ENCODE measurements at regions of chr5 and their contacts with region 1.

Region 1: DNA sequence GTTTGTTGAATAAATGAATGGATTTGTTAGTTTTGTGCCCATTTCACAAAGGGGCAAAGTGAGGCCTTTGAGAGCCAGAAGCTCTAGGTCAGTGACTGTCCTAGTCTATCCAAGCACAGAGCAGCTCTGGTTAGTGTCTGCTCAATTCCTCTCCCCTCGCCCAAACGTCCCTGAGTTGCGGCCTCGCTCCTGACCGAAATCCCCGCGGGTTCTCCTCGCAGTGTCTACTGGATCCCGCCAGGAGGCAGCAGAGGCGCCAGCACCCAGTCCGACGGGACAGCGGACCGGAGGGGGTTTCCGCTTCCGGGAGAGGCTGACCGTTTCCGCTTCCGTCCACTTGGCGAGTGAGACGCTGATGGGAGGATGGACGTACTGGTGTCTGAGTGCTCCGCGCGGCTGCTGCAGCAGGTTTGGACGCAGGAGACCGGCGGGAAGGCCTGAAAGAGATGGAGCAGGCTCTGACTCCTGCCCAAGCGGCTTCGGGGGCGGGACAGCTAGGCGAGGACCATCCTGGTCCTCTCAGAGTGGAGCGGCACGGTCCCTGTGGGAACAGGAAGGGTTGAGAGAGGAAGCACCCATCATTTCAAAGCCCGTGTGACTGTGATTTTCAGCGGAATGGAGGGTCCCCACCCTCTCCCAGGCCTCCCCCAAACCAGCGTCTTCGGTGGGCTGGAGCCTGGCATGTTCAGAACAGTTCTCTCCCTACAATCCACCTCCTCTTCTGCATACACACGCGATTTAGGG is at the start of gene RARS1:
- DNase-seq: peak; percentile 85 to 99 (median 96)

Region 2: GRCh38 chr5:167814828-167815227 is 671.5 kb before region 1 on chr5:
- intact Hi-C with region 1: no loop called
- DNase-seq: no peak

Region 3: DNA sequence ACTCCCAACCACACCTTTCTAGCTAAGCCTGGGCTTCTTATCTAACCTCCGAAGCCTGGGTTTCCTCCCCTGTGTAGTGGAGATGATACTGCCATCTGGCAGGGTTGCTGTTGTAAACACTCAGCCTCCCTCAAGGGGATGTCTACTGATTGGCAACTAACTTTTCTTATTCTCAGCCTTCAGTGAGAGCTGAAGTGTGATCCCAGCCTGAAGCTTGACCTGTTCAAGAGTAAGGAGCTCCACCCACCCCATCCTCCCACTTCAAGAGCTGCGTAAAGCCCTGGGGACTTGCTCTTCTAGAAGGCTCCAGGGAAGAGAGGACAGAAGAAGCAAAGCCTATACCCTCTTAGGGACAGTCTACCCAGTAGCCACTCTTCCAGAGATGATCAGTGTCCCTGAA is 216.3 kb before region 1 on chr5:
- intact Hi-C with region 1: loop called (anchors 10 kb)
- DNase-seq: no peak

Region 4: GRCh38 chr5:168434001-168434400 is 52.3 kb before region 1 on chr5:
- intact Hi-C with region 1: no loop called
- DNase-seq: peak in 26 of 42 donors; percentile 18 to 71 (median 45)

Region 5: DNA sequence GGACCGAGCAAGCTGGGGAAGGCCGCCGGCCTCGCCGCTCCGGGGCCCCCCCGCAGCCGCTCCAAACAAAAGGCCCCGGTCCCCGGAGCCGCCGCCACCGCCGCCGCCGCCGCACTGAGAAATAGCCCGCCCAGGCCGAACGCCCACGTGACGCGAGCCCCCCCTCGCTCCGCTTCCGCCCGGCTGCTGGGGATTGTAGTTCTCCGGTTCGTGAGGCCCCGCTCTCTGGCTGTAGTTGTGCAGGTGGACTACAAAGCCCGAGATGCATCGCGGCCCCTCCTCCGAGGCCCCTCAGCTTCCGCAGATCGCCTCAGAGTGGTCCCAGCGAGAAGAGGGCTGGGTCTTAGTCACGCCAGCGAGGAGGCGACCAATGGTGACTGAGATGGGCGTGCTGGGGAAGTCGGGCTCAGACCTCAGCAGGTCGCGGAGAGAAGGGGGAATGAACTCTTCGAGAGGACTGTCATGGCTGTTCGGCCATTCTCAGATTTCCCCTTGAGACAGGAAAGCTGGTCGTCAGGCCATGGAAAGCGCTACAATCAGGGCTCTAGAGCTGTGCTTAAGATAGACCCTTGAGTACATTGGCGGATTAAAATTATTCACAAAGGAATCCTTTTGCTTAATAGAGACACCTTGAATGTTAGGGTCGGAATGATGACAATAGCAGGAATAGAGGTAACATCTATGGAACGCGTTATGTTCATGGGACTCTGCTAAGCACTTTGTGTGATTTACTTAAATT is 93.3 kb after region 1 on chr5:
- intact Hi-C with region 1: loop called (anchors 10 kb)
- DNase-seq: peak; percentile 99 to 100 (median 100)